Naive thymus-derived CD4-positive, alpha-beta T cell (primary cell): ENCODE measurements at regions of chr11 and their contacts with region 1.

Region 1: DNA sequence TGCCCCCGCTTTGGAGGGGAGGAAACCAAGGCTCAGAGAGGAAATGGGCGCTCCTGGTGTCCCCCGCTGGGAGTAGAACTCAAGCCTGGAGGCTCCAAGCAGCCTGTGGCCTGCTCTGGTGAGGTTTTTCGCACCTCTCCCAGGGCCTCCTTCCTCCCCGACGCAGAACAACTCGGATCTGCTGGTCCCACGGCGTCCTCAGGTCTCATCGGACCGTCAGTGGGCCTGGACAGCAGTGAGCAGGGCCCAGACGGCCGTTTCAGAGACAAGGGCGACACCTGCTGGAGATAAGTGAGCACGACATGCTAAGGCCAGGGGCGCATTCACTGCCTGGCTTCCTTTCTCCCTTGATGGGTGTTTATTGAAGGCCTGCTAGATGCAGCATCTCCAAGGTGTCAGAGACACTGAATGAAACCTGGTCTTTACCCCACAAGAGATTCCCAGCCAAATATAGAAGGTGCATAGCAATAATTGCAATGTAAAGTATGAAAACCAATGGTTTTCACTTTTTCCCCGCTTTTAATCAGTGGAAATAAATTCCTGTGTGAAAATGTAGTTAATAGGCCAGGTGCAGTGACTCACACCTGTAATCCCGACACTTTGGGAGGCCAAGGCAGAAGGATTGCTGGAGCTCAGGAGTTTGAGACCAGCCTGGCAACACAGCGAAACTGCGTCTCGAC is 26.9 kb upstream of the CD82 start:
- DNase-seq: peak; percentile 26 to 74 (median 57)
- ATAC-seq: peak; percentile 90
- H3K4me3 ChIP-seq: no peak overlapping the region
- H3K4me3 Mint-ChIP-seq: no peak overlapping the region
- H3K27ac ChIP-seq: no peak overlapping the region
- H3K27ac Mint-ChIP-seq: peak overlapping the region in 1 of 9 donors; percentile 48
- H3K4me1 ChIP-seq: no peaks in the 10 kb centered on the region
- H3K4me1 Mint-ChIP-seq: peaks cover 0 to 6% (median 0%) of the 10 kb centered on the region in 7 donors
- H3K27me3 ChIP-seq: no peaks in the 10 kb centered on the region
- H3K27me3 Mint-ChIP-seq: peaks cover 0 to 4% (median 3%) of the 10 kb centered on the region in 5 donors

Region 2: DNA sequence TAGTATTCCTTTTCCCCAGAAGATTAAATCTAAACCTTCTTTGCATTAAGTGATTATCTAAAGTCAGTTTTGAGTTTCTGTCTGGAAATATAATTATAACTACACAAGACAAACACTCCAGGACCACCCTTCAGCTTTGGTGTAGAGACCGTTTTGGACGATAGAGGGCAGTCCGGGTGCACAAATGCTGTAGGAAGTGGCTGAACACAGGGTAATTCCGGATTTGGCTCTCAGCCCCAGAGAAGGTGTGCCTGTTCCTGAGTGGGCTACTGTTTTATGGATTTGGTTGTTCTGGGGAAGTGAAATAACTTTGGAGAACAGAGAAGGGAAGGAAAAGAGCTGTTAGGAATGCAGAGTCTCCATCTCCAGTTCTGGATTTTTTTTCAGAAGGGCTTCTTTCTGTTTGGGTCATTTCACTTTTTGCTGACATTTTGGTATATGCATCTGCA is 428.3 kb before region 1 on chr11:
- CTCF ChIA-PET with region 1: interaction called, 5 read pairs
- POLR2A ChIA-PET with region 1: no interaction called
- intact Hi-C with region 1: loop called in 1 of 2 experiments (anchors 1 kb)
- DNase-seq: peak in 8 of 9 donors; percentile 12 to 54 (median 38)
- ATAC-seq: peak; percentile 91
- H3K4me3 ChIP-seq: no peak overlapping the region
- H3K4me3 Mint-ChIP-seq: peak overlapping the region in 3 of 10 donors; percentile 10 to 45 (median 25)
- H3K27ac ChIP-seq: no peak overlapping the region
- H3K27ac Mint-ChIP-seq: peak overlapping the region in 2 of 9 donors; percentile 30 to 74
- H3K4me1 ChIP-seq: no peaks in the 10 kb centered on the region
- H3K4me1 Mint-ChIP-seq: peaks cover 6 to 14% (median 8%) of the 10 kb centered on the region in 7 donors
- H3K27me3 ChIP-seq: no peaks in the 10 kb centered on the region
- H3K27me3 Mint-ChIP-seq: no peaks in the 10 kb centered on the region

Region 3: GRCh38 chr11:44286268-44286880 is 252.1 kb before region 1 on chr11:
- CTCF ChIA-PET with region 1: interaction called, 6 read pairs
- POLR2A ChIA-PET with region 1: no interaction called
- intact Hi-C with region 1: loop called in 1 of 2 experiments (anchors 1 kb)
- DNase-seq: peak in 8 of 9 donors; percentile 17 to 56 (median 40)
- ATAC-seq: peak; percentile 67
- H3K4me3 ChIP-seq: no peak overlapping the region
- H3K4me3 Mint-ChIP-seq: no peak overlapping the region
- H3K27ac ChIP-seq: no peak overlapping the region
- H3K27ac Mint-ChIP-seq: peak overlapping the region in 1 of 9 donors; percentile 48
- H3K4me1 ChIP-seq: no peaks in the 10 kb centered on the region
- H3K4me1 Mint-ChIP-seq: peaks cover 0 to 4% (median 0%) of the 10 kb centered on the region in 7 donors
- H3K27me3 ChIP-seq: no peaks in the 10 kb centered on the region
- H3K27me3 Mint-ChIP-seq: peaks cover 0 to 14% (median 3%) of the 10 kb centered on the region in 5 donors

Region 4: GRCh38 chr11:44519989-44520737 is 18.4 kb before region 1 on chr11:
- CTCF ChIA-PET with region 1: interaction called, 20 read pairs
- POLR2A ChIA-PET with region 1: no interaction called
- intact Hi-C with region 1: loop called (anchors 1 kb)
- DNase-seq: no peak
- ATAC-seq: no peak
- H3K4me3 ChIP-seq: no peak overlapping the region
- H3K4me3 Mint-ChIP-seq: no peak overlapping the region
- H3K27ac ChIP-seq: no peak overlapping the region
- H3K27ac Mint-ChIP-seq: no peak overlapping the region
- H3K4me1 ChIP-seq: no peaks in the 10 kb centered on the region
- H3K4me1 Mint-ChIP-seq: peaks cover 0 to 4% (median 3%) of the 10 kb centered on the region in 7 donors
- H3K27me3 ChIP-seq: no peaks in the 10 kb centered on the region
- H3K27me3 Mint-ChIP-seq: peaks cover 14 to 41% (median 22%) of the 10 kb centered on the region in 5 donors